CD4-positive, alpha-beta T cell (primary cell): ENCODE measurements at regions of chr2 and their contacts with region 1.

Region 1: DNA sequence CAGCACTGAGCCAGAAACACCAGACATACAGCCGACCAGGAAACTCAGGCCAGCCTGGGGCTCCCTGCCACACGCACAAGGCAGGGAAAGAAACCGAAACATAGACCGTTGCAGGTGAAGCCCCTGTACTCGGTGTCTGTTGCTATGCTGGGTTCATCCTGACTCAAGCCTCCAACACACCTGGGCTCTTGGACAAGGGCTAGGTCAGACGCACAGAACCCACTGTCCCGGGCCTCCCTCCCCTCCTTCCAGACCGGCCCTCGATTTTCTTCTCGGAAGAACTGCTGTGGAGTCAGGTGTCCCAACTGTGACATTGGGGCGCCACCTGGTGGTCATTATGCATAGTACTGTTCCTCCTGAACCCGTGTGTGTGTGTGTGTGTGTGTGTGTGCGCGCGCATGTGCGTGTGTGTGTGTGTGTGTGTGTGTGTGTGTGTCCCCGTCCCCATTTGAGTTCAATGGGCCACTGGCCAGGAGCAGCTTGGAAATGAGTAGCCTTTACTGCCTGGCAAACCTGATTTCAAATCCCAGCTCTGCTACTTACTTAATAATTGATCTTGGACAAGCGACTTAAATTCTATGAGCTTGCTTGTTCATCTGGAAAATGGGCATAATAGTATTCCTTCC is 55.4 kb upstream of the GLI2 start:
- DNase-seq: peak; percentile 52 to 84 (median 66)
- ATAC-seq: peak; percentile 81
- H3K4me3 ChIP-seq: no peak overlapping the region
- H3K4me3 Mint-ChIP-seq: peak overlapping the region; percentile 74
- H3K27ac ChIP-seq: no peak overlapping the region
- H3K27ac Mint-ChIP-seq: peak overlapping the region; percentile 27
- H3K4me1 ChIP-seq: peaks cover 5% of the 10 kb centered on the region
- H3K4me1 Mint-ChIP-seq: no peaks in the 10 kb centered on the region
- H3K27me3 ChIP-seq: peaks cover 6 to 15% of the 10 kb centered on the region in 2 experiments
- H3K27me3 Mint-ChIP-seq: peaks cover 42% of the 10 kb centered on the region
- CTCF ChIP-seq: peak; percentile 44

Region 2: GRCh38 chr2:119641562-119642258 is 1038.5 kb before region 1 on chr2:
- CTCF ChIA-PET with region 1: interaction called, 4 read pairs
- POLR2A ChIA-PET with region 1: no interaction called
- intact Hi-C with region 1: loop called in 1 of 2 experiments (anchors 1 kb)
- DNase-seq: peak; percentile 46 to 84 (median 64)
- ATAC-seq: peak; percentile 94
- H3K4me3 ChIP-seq: no peak overlapping the region
- H3K4me3 Mint-ChIP-seq: no peak overlapping the region
- H3K27ac ChIP-seq: no peak overlapping the region
- H3K27ac Mint-ChIP-seq: no peak overlapping the region
- H3K4me1 ChIP-seq: peaks cover 4% of the 10 kb centered on the region
- H3K4me1 Mint-ChIP-seq: peaks cover 5% of the 10 kb centered on the region
- H3K27me3 ChIP-seq: no peaks in the 10 kb centered on the region
- H3K27me3 Mint-ChIP-seq: peaks cover 5% of the 10 kb centered on the region
- CTCF ChIP-seq: peak; percentile 96

Region 3: DNA sequence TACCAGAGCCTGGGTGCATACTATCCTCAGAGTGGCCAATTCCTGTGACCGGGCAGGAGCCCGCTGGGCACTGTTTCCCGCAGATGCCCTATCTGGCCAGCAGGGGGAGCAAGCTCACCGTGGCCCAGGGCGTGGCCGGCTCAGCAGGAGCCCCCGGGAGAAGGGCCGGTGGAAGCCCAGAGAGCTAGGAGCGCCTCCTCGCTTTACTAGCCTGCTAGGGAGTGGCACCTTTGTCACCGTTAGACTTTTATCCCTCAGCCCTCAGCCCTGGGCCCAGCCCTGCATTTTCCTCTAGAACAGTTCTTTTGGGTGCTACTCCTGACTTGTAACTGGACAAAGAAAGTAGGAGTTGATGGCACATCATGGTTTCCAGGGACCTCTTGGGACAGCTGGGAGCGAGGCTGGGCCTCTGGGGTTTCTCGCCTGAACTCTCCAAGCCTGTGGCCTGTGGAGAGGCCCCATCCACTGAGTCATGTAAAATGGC is 977.3 kb before region 1 on chr2:
- CTCF ChIA-PET with region 1: no interaction called
- POLR2A ChIA-PET with region 1: no interaction called
- intact Hi-C with region 1: loop called in 1 of 2 experiments (anchors 5 kb)
- DNase-seq: peak; percentile 28 to 82 (median 54)
- ATAC-seq: peak; percentile 71
- H3K4me3 ChIP-seq: no peak overlapping the region
- H3K4me3 Mint-ChIP-seq: no peak overlapping the region
- H3K27ac ChIP-seq: no peak overlapping the region
- H3K27ac Mint-ChIP-seq: no peak overlapping the region
- H3K4me1 ChIP-seq: peaks cover 26% of the 10 kb centered on the region
- H3K4me1 Mint-ChIP-seq: peaks cover 6% of the 10 kb centered on the region
- H3K27me3 ChIP-seq: no peaks in the 10 kb centered on the region
- H3K27me3 Mint-ChIP-seq: no peaks in the 10 kb centered on the region
- CTCF ChIP-seq: peak; percentile 98

Region 4: GRCh38 chr2:120109186-120110061 is 570.8 kb before region 1 on chr2:
- CTCF ChIA-PET with region 1: no interaction called
- POLR2A ChIA-PET with region 1: no interaction called
- intact Hi-C with region 1: loop called (anchors 1 to 2 kb)
- DNase-seq: peak in 4 of 14 experiments; percentile 3 to 83 (median 55)
- ATAC-seq: peak; percentile 83
- H3K4me3 ChIP-seq: peak overlapping the region; percentile 5
- H3K4me3 Mint-ChIP-seq: peak overlapping the region; percentile 44
- H3K27ac ChIP-seq: no peak overlapping the region
- H3K27ac Mint-ChIP-seq: peak overlapping the region; percentile 2
- H3K4me1 ChIP-seq: no peaks in the 10 kb centered on the region
- H3K4me1 Mint-ChIP-seq: peaks cover 39% of the 10 kb centered on the region
- H3K27me3 ChIP-seq: no peaks in the 10 kb centered on the region
- H3K27me3 Mint-ChIP-seq: no peaks in the 10 kb centered on the region
- CTCF ChIP-seq: peak; percentile 83

Region 5: GRCh38 chr2:120343433-120344105 is 336.7 kb before region 1 on chr2:
- CTCF ChIA-PET with region 1: interaction called, 3 read pairs
- POLR2A ChIA-PET with region 1: no interaction called
- intact Hi-C with region 1: loop called (anchors 2 to 5 kb)
- DNase-seq: peak; percentile 14 to 73 (median 42)
- ATAC-seq: peak; percentile 49
- H3K4me3 ChIP-seq: no peak overlapping the region
- H3K4me3 Mint-ChIP-seq: peak overlapping the region; percentile 84
- H3K27ac ChIP-seq: no peak overlapping the region
- H3K27ac Mint-ChIP-seq: no peak overlapping the region
- H3K4me1 ChIP-seq: peaks cover 35% of the 10 kb centered on the region
- H3K4me1 Mint-ChIP-seq: peaks cover 19% of the 10 kb centered on the region
- H3K27me3 ChIP-seq: peaks cover 51 to 67% of the 10 kb centered on the region in 2 experiments
- H3K27me3 Mint-ChIP-seq: peaks cover 67% of the 10 kb centered on the region
- CTCF ChIP-seq: peak; percentile 42